ENCODE measurements at regions of chr2 and their contacts with region 1.

Region 1: GRCh38 chr2:152175458-152176325 is at the start of gene STAM2:
- DNase-seq: peak; percentile 92
- H3K4me3 Mint-ChIP-seq: peak within 1 kb of the TSS; percentile 94
- H3K27ac Mint-ChIP-seq: peak within 1 kb of the TSS; percentile 100
- H3K4me1 Mint-ChIP-seq: peaks cover 16% of the 10 kb centered on the region
- H3K27me3 Mint-ChIP-seq: no peaks in the 10 kb centered on the region
- CTCF ChIP-seq: peak; percentile 97
- total RNA-seq, gene STAM2: 27.6 and 35.3 TPM in 2 replicates

Region 2: GRCh38 chr2:152036611-152037469 is 138.9 kb before region 1 on chr2:
- CTCF ChIA-PET with region 1: interaction called, 39 read pairs
- POLR2A ChIA-PET with region 1: interaction called, 4 read pairs
- intact Hi-C with region 1: loop called (anchors 1 kb)
- DNase-seq: peak; percentile 76
- H3K4me3 Mint-ChIP-seq: no peak overlapping the region
- H3K27ac Mint-ChIP-seq: no peak overlapping the region
- H3K4me1 Mint-ChIP-seq: no peaks in the 10 kb centered on the region
- H3K27me3 Mint-ChIP-seq: no peaks in the 10 kb centered on the region
- CTCF ChIP-seq: peak; percentile 86

Region 3: DNA sequence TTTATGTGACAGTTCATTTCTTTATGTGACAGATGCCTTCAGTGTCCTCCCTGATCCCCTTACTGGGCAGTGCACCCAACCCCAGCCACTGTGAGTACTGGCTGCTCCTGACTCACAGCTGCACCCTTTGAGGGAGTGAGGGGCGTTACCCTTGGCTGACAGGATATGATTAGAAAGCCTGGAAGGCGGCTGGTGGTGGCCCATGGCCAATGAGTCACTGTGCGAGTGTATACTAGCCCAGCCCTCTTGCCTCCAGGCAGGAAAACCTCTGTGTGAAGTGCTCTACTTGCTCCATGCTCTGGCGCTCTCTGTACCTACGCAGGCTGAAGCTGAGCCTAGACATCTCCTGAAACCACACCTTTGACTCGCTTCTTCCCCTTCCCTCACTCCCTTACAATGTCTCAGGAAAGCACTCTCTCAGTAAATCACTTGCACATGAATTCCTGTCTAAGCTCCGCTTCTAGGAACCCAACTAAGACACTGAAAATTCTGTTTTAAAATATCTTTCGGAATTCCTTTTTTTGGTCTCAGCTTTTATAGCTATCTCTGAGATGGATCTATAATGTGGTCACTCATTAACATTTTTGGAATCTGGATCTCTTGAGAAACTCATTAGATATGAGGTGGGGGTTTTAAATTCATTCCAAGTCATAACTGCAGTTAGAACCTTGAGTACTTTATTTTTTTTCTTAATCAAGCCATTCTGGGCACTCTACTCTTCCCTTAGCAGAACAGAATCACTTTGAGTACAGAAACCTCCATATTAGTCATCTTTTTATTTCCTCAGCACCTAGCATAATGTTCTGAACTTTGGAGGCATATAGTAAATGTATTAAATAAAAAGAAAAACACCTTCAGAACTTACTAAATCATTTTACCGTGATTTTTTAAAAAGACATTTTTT is 25.1 kb after region 1 on chr2:
- CTCF ChIA-PET with region 1: interaction called, 5 read pairs
- POLR2A ChIA-PET with region 1: interaction called, 16 read pairs
- intact Hi-C with region 1: no loop called
- DNase-seq: peak; percentile 100
- H3K4me3 Mint-ChIP-seq: peak overlapping the region; percentile 53
- H3K27ac Mint-ChIP-seq: peak overlapping the region; percentile 74
- H3K4me1 Mint-ChIP-seq: peaks cover 26% of the 10 kb centered on the region
- H3K27me3 Mint-ChIP-seq: no peaks in the 10 kb centered on the region
- CTCF ChIP-seq: no peak

Region 4: DNA sequence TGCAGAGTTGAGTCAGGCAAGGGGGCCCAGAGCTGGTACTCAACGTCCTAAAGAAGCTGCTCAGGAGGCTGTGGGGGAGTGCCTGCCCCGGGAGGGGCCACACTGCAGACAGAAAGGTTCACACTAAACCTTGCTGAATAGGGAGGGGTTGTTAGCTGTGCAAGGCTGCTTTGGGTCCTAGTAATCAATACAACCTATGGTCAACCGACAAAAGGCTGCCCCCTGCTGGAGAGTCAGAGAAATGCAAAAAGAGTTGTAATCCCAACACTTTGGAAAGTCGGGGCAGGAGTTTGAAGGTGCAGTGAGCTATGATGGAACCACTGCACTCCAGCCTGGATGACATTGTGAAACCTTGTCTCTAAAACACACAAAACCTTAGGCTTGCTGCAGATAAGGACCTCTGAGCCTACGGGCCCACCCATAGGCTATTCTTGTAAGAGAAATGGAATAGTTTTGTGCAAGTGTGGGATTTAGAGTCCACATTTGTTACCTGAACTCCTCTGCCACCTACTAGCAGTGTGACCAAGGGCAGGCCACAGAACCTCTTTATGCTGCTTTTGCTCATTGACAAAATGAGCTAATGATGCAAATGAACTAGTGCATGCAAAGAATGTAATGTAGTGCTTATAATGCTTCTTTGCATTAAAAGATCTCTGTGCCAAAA is 460.1 kb after region 1 on chr2:
- CTCF ChIA-PET with region 1: interaction called, 99 read pairs
- POLR2A ChIA-PET with region 1: interaction called, 24 read pairs
- intact Hi-C with region 1: loop called (anchors 1 kb)
- DNase-seq: peak; percentile 72
- H3K4me3 Mint-ChIP-seq: no peak overlapping the region
- H3K27ac Mint-ChIP-seq: no peak overlapping the region
- H3K4me1 Mint-ChIP-seq: no peaks in the 10 kb centered on the region
- H3K27me3 Mint-ChIP-seq: no peaks in the 10 kb centered on the region
- CTCF ChIP-seq: peak; percentile 77

Region 5: DNA sequence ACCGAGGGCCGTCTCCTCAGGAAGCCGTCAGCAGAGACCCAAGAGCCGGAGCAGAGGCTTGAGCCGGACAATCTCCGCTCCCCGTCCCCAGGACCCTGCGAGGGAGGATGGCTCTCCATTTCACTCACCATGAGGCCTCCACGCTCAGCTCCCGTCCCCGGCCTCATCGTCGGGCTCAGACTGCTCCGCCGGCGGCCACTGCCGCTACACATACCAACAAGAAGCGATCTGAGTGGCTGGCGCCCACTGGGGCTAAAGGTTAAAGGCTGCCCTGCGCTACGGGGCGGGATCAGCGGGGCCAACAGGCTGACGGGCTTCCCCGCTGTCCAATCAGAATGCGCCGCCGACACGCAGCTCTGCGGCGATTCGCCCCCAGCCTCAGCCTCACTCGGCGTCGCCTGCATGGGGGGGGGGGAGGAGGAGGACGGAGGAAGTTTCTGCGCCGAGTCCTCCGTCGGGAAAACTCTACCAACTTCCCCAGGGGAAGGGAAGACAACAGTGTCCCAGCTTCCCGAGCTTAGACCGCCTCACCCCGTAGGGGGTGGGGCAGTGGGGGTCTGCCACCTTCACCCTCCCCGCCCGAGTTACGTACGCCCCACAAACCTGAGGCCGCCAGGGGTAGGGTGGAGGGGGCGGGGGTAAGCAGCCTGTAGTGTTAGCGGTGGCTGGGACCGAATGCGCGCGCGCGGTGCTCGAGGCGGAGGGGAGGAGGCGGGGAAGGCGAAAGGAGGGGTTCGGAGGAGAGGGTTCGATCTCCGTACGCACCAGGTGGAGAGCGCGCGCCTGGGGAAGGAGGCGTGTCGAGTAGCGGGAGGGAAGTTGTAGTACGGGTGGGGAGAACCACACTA is 541.8 kb after region 1 on chr2 and contains the start of gene PRPF40A:
- CTCF ChIA-PET with region 1: interaction called, 4 read pairs
- POLR2A ChIA-PET with region 1: interaction called, 21 read pairs
- intact Hi-C with region 1: loop called (anchors 2 kb)
- DNase-seq: peak; percentile 98
- H3K4me3 Mint-ChIP-seq: peak within 1 kb of the TSS; percentile 99
- H3K27ac Mint-ChIP-seq: peak within 1 kb of the TSS; percentile 99
- H3K4me1 Mint-ChIP-seq: peaks cover 10% of the 10 kb centered on the region
- H3K27me3 Mint-ChIP-seq: no peaks in the 10 kb centered on the region
- CTCF ChIP-seq: no peak
- total RNA-seq, gene PRPF40A: 140 and 147 TPM in 2 replicates

Measured in MCF 10A (cell line).